ENCODE measurements at regions of chr9 and their contacts with region 1.

Region 1: GRCh38 chr9:136742591-136743391 is at the start of gene LCN10:
- DNase-seq: no peak
- H3K4me3 Mint-ChIP-seq: peak within 1 kb of the TSS; percentile 61
- H3K27ac Mint-ChIP-seq: no peak within 1 kb of the TSS
- H3K4me1 Mint-ChIP-seq: peaks cover 18% of the 10 kb centered on the region
- H3K27me3 Mint-ChIP-seq: no peaks in the 10 kb centered on the region
- total RNA-seq, gene LCN10: 0.83 to 1.0 TPM

Region 2: GRCh38 chr9:135343837-135344522 is 1398.8 kb before region 1 on chr9:
- CTCF ChIA-PET with region 1: no interaction called
- intact Hi-C with region 1: no loop called
- DNase-seq: peak; percentile 54
- H3K4me3 Mint-ChIP-seq: no peak overlapping the region
- H3K27ac Mint-ChIP-seq: no peak overlapping the region
- H3K4me1 Mint-ChIP-seq: no peaks in the 10 kb centered on the region
- H3K27me3 Mint-ChIP-seq: peaks cover 4% of the 10 kb centered on the region

Region 3: GRCh38 chr9:136757328-136757727 is 14.5 kb after region 1 on chr9:
- CTCF ChIA-PET with region 1: interaction called, 14 read pairs
- intact Hi-C with region 1: no loop called
- DNase-seq: no peak
- H3K4me3 Mint-ChIP-seq: no peak overlapping the region
- H3K27ac Mint-ChIP-seq: no peak overlapping the region
- H3K4me1 Mint-ChIP-seq: no peaks in the 10 kb centered on the region
- H3K27me3 Mint-ChIP-seq: peaks cover 17% of the 10 kb centered on the region